ENCODE measurements at regions of chr10 and their contacts with region 1.

Region 1: DNA sequence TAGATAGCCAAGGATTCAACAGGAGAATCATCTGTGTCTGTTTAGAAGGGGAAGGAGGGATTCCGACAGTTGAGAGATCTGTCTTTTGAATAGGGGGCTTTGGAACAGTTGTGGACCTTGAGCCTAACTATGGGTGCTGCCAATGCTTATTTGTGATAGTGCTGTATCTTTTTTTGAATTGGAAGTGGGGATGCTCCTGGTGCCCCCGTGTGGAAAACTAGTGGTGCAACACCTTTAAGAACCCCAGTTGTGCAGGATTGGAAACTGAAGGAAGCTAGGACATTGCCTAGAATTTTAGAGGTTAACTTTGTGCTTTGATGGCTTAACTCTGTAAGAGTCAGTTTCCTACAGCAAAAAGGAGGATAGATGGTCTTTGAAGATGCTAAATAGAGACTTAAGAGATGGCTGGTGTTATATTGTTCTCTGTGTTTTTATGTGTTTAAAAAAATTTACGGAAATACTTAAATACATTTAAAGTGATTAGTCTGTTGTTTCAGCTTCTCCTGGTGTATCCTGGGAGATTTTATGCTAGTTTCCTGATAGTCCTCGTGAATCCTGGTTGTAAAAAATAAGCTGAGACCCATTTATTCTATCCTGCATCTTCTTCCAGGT is 69.3 kb downstream of the AP3M1 start:
- DNase-seq: peak; percentile 75
- H3K4me3 ChIP-seq: no peak overlapping the region
- H3K27ac ChIP-seq: peak overlapping the region; percentile 90
- H3K4me1 ChIP-seq: peaks cover 50% of the 10 kb centered on the region
- H3K27me3 ChIP-seq: no peaks in the 10 kb centered on the region
- CTCF ChIP-seq: peak; percentile 75 to 77
- POLR2A ChIP-seq: no peak

Region 2: DNA sequence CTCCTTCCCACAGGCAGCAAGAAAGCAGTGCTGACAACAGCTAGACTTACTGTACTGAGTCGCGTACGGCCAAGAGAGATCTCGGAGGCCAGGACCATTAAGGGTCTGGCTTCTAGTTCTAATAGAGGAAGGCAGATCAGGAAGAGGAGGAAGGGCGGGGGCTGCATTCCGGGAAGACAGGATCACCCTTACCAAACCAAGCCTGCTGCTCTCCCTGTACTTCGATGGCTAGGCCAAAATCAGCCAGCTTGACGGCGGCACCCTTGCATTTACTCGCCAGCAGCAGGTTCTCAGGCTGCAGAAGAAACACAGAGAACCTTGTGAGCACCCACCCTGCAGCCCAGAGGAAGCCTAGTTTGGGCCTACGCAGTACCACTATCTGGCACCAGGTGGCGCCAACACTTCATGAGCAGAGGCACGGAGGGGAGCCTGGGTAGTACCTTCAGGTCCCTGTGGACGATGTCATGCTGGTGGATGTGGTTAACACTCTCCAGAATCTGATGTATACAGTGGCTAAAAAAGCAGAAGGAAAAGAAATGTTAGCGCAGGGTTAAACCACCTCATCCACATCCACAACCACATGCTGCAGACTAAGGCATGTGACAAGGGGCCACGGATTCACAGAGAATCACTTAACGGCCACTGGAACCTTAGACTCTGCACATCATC is 232.3 kb before region 1 on chr10:
- CTCF ChIA-PET with region 1: interaction called, 4 read pairs
- POLR2A ChIA-PET with region 1: no interaction called
- dilution Hi-C with region 1: no loop called
- intact Hi-C with region 1: loop called (anchors 1 kb)
- DNase-seq: peak; percentile 76
- H3K4me3 ChIP-seq: no peak overlapping the region
- H3K27ac ChIP-seq: no peak overlapping the region
- H3K4me1 ChIP-seq: no peaks in the 10 kb centered on the region
- H3K27me3 ChIP-seq: no peaks in the 10 kb centered on the region
- CTCF ChIP-seq: peak; percentile 99
- POLR2A ChIP-seq: no peak

Region 3: DNA sequence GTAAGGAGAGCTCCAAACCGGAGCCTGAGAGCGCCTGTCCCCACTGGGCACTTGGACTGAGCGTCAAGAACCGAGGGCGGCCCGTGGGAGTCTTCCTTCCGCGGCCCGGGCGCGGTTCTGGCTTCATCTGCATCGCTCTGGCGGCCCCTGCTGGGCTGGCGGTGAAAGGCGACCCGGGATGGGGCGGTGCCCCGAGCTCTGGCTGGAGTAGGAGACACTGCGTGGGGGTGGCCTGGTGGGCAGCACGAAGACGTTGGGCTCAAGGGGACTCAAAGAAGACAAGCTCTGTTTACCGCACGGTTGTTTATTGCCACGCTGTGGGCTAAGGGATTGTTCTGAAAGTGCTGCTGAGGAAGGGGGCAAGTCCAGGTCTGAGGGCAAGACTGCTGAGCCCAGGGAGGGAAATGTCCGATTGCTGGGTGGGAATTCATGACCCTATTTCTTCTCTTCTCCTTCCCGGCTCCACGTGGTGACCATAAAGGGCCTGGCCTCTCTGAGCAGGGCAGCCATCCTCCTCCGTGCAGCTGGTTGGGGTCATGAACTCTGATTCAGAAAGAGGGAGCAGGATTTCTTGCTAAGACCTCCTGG is 140.6 kb before region 1 on chr10:
- CTCF ChIA-PET with region 1: interaction called, 29 read pairs
- POLR2A ChIA-PET with region 1: no interaction called
- dilution Hi-C with region 1: no loop called
- intact Hi-C with region 1: loop called (anchors 1 kb)
- DNase-seq: peak; percentile 71
- H3K4me3 ChIP-seq: no peak overlapping the region
- H3K27ac ChIP-seq: peak overlapping the region; percentile 47
- H3K4me1 ChIP-seq: peaks cover 19% of the 10 kb centered on the region
- H3K27me3 ChIP-seq: no peaks in the 10 kb centered on the region
- CTCF ChIP-seq: peak; percentile 96 to 97
- POLR2A ChIP-seq: no peak

Region 4: GRCh38 chr10:73997787-73998622 is 83.3 kb before region 1 on chr10 and contains the start of gene VCL:
- CTCF ChIA-PET with region 1: interaction called, 62 read pairs
- POLR2A ChIA-PET with region 1: no interaction called
- dilution Hi-C with region 1: no loop called
- intact Hi-C with region 1: loop called (anchors 1 kb)
- DNase-seq: peak; percentile 99
- H3K4me3 ChIP-seq: peak within 1 kb of the TSS; percentile 73 to 91 (median 86)
- H3K27ac ChIP-seq: peak within 1 kb of the TSS; percentile 83
- H3K4me1 ChIP-seq: peaks cover 24% of the 10 kb centered on the region
- H3K27me3 ChIP-seq: no peaks in the 10 kb centered on the region
- CTCF ChIP-seq: no peak
- POLR2A ChIP-seq: peak; percentile 99
- total RNA-seq, gene VCL: 203 and 231 TPM in 2 replicates

Region 5: DNA sequence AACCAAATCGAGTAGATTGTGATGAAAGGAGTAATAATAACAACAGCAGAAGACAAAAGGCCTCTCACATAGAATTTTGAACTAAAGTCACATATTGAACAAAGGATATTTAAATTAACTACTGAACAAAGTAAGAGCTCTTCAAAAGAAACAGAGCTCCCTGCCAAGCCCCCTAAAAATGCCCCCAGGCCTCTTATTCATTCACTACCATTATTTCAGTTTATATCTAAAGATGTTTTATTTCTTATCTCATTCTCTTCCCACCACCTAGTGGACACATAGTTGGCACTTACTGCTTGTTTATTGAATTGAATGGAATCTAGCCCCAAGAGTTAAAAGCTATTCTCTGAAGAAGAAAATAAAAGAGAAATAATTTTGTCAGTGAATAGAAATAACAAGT is 46.0 kb before region 1 on chr10:
- CTCF ChIA-PET with region 1: interaction called, 32 read pairs
- POLR2A ChIA-PET with region 1: no interaction called
- dilution Hi-C with region 1: no loop called
- intact Hi-C with region 1: no loop called
- DNase-seq: peak; percentile 51
- H3K4me3 ChIP-seq: no peak overlapping the region
- H3K27ac ChIP-seq: no peak overlapping the region
- H3K4me1 ChIP-seq: peaks cover 10% of the 10 kb centered on the region
- H3K27me3 ChIP-seq: no peaks in the 10 kb centered on the region
- CTCF ChIP-seq: peak; percentile 9 to 14
- POLR2A ChIP-seq: no peak

Region 6: GRCh38 chr10:74071157-74071556 is 10.1 kb before region 1 on chr10:
- CTCF ChIA-PET with region 1: interaction called, 42 read pairs
- POLR2A ChIA-PET with region 1: no interaction called
- dilution Hi-C with region 1: no loop called
- intact Hi-C with region 1: loop called (anchors 1 kb)
- DNase-seq: peak; percentile 94
- H3K4me3 ChIP-seq: peak overlapping the region in 1 of 3 experiments; percentile 16
- H3K27ac ChIP-seq: peak overlapping the region; percentile 9
- H3K4me1 ChIP-seq: peaks cover 52% of the 10 kb centered on the region
- H3K27me3 ChIP-seq: no peaks in the 10 kb centered on the region
- CTCF ChIP-seq: no peak
- POLR2A ChIP-seq: peak; percentile 35

Measured in endothelial cell of umbilical vein (primary cell).